ENCODE measurements at regions of chr12 and their contacts with region 1.

Region 1: DNA sequence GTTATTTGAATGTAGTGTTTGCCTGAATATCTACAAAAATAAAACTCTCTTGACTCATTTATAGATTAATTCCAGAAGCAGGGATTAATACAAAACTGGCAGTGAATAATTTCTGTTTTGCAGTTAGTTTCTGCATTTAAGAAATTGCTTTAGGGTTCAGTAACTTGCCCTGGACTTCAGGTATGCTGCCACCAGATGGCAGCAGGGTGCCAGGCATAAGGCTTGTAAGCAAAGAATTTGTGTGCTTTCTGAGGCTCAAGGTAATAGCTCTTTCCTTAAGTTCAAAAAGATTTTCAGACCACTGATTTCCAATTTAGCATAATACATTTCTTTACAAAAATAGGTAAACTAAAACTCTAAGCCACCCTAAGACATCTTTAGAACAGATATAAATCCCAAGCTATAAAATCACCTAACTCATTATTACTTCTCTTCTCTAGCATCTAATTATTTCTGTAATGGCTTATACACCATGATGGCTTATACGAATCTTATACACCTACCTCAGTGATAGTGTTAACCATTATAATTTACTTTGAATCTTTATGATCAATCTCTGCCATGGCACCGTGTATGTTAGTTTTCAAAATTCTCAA is 398.3 kb downstream of the APAF1 start:
- DNase-seq: no peak
- H3K4me3 ChIP-seq: no peak overlapping the region
- H3K27me3 ChIP-seq: no peaks in the 10 kb centered on the region
- CTCF ChIP-seq: peak; percentile 90

Region 2: DNA sequence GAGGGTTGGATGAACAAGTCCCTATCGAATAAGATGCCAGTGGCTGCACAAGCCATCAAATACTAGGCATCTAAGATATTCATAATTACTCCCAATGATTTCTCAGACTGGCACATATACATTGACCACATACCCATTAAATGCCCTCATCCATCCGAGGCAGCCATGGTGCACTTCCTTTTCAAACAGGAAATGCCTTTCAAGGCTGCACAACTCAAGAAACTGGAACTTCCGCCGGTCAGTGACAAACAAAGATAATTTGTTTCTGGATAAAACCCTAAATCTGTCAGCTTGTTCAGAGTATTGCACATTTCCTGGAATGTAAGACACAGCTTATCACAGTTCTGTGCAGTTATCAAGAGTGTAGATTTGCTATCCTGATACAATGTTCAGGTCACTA is 1377.2 kb before region 1 on chr12:
- CTCF ChIA-PET with region 1: no interaction called
- POLR2A ChIA-PET with region 1: no interaction called
- DNase-seq: no peak
- H3K4me3 ChIP-seq: no peak overlapping the region
- H3K27me3 ChIP-seq: no peaks in the 10 kb centered on the region
- CTCF ChIP-seq: no peak

Region 3: GRCh38 chr12:99658671-99659349 is 615.4 kb after region 1 on chr12:
- CTCF ChIA-PET with region 1: interaction called, 17 read pairs
- POLR2A ChIA-PET with region 1: no interaction called
- DNase-seq: no peak
- H3K4me3 ChIP-seq: no peak overlapping the region
- H3K27me3 ChIP-seq: no peaks in the 10 kb centered on the region
- CTCF ChIP-seq: no peak

Region 4: DNA sequence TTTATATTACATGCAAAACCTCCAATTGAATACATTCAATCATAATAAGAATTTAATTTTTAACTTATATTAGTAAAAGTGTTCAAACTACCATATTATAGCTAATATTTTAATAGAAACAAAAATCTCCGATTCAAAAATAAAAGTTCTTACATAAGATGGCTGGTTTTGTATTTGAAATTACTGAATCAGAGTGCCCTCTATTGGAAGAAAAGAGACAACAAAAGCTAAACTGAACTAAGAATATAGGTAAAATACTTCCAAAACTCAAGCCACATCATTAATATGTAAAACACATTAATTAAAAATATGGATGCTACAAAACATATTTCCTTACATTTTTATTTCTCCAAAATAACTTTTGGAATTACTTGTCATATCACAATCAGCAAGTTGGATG is 724.4 kb after region 1 on chr12:
- CTCF ChIA-PET with region 1: interaction called, 11 read pairs
- POLR2A ChIA-PET with region 1: no interaction called
- DNase-seq: no peak
- H3K4me3 ChIP-seq: no peak overlapping the region
- H3K27me3 ChIP-seq: no peaks in the 10 kb centered on the region
- CTCF ChIP-seq: peak; percentile 43; the same call in 1 of the 2 replicates